ENCODE measurements at regions of chr12 and their contacts with region 1.

Region 1: DNA sequence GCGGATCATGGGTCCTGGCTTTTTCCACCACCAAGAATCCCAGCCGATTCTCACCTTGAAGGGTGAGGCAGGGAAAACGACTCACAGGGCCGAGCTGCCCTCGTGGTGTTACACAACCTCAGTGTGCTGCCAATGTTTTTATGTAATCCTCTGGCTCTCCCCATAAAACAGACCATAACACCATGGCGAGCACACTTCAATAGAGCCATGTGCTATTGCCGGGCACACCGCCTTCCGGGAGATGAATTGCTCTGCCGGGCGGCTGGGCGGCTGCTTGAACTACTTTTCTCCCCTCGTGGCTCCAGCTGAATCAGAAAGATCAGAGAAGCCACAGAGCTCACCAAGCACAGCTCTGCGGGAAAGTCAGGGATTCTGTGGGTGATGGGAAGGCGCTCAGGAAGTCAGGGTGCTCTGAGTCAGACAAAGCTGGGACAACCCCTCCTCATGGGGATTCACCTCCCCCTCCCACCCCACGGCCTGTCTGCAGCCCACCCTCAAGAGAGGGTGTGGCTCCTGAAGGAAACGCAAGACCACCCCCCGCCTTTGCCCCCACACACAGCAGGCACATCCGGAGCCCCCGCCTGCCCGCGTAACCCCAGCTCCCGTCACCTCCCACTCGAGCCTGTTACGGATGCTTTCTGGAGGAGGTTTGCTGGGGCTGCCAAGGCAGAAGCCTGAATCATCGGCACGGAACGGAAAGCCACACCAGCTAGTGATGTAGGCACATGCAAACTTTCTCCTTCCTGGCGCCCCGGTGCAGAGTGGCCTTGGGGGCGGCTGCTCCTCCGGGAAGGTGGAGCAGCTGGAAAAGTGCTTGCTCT is 1.8 kb downstream of the GALNT9 start:
- DNase-seq: peak in 1 of 2 donors; percentile 26
- H3K4me3 ChIP-seq: peak overlapping the region in 2 of 3 donors; percentile 0 to 41
- H3K27ac ChIP-seq: no peak overlapping the region
- H3K4me1 ChIP-seq: peaks cover 0 to 8% of the 10 kb centered on the region in 2 donors
- H3K27me3 ChIP-seq: peaks cover 5 to 81% of the 10 kb centered on the region in 2 donors
- CTCF ChIP-seq: no peak
- POLR2A ChIP-seq: no peak

Region 2: DNA sequence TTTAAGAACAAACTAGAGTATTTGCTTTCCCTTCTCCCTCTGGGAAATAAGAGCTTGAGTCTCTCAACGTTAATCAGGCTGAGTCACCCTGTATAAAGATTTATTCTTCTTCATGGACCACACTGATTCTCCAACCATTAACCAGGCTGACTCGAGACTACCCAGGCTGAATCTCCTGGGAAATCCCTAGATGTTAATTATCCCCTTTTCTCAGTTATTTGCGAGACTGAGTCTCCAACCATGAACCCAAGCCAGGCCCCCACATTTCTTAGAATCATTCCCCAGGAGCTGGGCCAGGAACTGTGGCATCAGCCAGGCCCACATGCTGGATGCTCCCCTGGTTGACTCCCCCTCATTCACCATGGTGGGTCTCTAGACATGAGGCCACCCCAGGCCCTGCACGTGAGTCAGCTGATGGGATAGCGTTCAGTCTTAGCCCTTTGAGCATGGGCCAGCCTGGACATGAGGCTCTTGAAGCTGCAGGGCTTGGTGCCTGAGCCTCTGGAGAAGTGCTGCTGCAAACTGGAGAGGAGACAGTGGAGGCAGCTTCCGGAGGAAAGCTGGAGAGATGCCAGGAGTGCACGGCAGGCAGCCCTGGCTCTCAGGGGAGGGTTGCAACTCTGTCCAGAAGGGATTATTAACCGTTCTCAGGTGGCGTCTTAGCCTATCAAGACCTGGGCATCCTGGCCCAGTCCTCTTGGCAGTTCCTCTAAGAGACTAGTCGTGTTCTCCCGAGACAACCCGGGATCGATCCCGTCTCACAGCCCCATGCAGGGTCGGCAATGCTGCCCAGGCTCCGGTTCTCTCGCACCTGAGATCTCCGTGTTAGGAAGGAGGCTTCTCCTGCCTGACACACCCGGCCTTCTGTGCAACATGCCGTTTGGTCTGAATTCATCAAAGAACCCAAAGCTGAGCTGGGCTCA is 1077.3 kb before region 1 on chr12:
- intact Hi-C with region 1: loop called (anchors 10 kb)
- DNase-seq: no peak
- H3K4me3 ChIP-seq: no peak overlapping the region
- H3K27ac ChIP-seq: no peak overlapping the region
- H3K4me1 ChIP-seq: no peaks in the 10 kb centered on the region
- H3K27me3 ChIP-seq: peaks cover 0 to 13% of the 10 kb centered on the region in 2 donors
- CTCF ChIP-seq: no peak
- POLR2A ChIP-seq: no peak

Region 3: GRCh38 chr12:132275110-132275531 is 52.4 kb before region 1 on chr12:
- intact Hi-C with region 1: no loop called
- DNase-seq: no peak
- H3K4me3 ChIP-seq: no peak overlapping the region
- H3K27ac ChIP-seq: no peak overlapping the region
- H3K4me1 ChIP-seq: no peaks in the 10 kb centered on the region
- H3K27me3 ChIP-seq: peaks cover 0 to 97% of the 10 kb centered on the region in 2 donors
- CTCF ChIP-seq: no peak
- POLR2A ChIP-seq: no peak

Region 4: GRCh38 chr12:132310181-132311024 is 17.2 kb before region 1 on chr12:
- intact Hi-C with region 1: no loop called
- DNase-seq: no peak
- H3K4me3 ChIP-seq: no peak overlapping the region
- H3K27ac ChIP-seq: no peak overlapping the region
- H3K4me1 ChIP-seq: no peaks in the 10 kb centered on the region
- H3K27me3 ChIP-seq: peaks cover 0 to 40% of the 10 kb centered on the region in 2 donors
- CTCF ChIP-seq: no peak
- POLR2A ChIP-seq: no peak

Region 5: DNA sequence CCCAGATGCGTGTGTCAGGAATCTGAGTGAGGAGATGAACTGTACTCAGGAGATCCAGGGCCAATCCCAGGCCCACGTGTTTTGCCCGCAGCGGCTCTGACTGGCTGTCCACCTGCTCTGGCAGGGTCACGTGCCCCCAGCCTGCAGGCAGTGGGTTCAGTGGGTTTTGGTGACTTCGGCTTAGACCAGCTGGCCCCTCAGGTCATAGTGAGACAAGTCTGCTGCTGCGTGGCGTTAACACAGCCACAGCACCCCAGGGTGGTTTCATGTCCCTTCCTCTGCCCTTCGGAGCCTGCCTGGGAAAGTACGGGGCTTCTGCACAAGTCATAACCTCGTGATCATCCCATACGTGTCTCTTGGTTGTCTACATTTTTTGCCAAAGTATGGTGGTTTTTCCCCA is 165.0 kb after region 1 on chr12:
- intact Hi-C with region 1: no loop called
- DNase-seq: no peak
- H3K4me3 ChIP-seq: peak overlapping the region in 2 of 3 donors; percentile 63 to 94
- H3K27ac ChIP-seq: no peak overlapping the region
- H3K4me1 ChIP-seq: peaks cover 40 to 54% of the 10 kb centered on the region in 2 donors
- H3K27me3 ChIP-seq: no peaks in the 10 kb centered on the region
- CTCF ChIP-seq: no peak
- POLR2A ChIP-seq: no peak